H1 (cell line): ENCODE measurements at regions of chr3 and their contacts with region 1.

Region 1: DNA sequence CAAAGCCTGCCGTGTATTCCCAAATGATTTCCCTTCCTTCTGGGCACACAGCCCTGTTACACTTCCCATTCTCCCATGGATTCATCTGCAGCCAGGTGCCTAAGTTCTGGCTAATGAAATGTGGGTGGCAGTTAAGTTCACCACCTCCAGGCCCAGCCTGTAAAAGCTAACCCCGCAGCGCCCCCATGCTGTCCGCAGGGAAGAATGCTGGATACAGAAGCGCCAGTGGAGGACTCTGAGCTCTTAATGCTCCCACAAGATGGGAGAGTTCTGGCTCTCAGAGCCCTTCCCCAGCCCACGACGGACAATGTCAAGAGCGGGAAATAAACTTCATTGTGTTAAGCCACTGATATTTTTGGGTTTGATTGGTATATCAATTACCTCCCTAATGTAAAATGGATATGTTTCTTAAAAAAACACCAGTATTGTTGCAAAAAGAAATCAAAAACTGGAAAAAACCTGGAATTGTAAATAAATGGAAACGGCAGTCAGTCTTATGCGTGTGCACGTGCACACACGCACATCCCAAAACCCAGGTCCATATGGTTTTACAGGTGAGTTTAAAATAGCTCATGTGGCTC is 37.7 kb upstream of the FGD5 start:
- DNase-seq: peak; percentile 70 to 85
- H3K4me3 ChIP-seq: no peak overlapping the region
- H3K27ac ChIP-seq: no peak overlapping the region
- H3K4me1 ChIP-seq: peaks cover 2 to 9% (median 6%) of the 10 kb centered on the region in 4 experiments; a peak in 4 of 7 replicates
- H3K27me3 ChIP-seq: no peaks in the 10 kb centered on the region
- CTCF ChIP-seq: peak; percentile 84 to 97 (median 94)
- EP300 ChIP-seq: no peak
- POLR2A ChIP-seq: no peak
- RAD21 ChIP-seq: peak; percentile 93 to 95

Region 2: DNA sequence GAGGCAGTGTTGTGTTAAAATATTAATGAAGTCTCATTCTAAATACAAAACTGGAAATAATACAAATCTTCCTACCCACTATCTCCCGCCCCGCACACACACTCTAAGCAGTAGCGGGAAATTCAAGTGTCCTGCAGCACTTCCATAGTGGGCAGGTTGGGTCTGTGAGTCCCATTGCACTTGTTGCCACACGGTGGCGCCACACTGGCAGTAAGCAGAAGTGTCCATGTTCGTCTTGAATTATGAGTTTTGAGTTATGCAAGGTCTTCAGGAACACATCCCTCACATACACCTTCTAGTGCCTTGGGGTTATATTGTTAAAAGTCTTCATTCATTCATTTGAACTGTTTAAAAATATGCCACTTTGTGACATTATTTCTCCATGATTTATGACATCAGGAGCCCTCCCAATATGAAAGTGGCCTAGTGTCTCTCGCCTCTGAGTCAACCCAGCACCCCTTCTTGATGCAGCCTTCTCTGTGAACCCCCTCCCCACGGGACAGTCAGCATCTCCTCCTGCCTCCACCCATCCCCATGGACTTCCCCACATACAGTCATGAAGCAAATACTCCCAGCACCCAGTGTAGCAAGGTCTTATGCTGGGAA is 147.1 kb before region 1 on chr3:
- CTCF ChIA-PET with region 1: interaction called, 16 read pairs
- POLR2A ChIA-PET with region 1: no interaction called
- DNase-seq: peak in 1 of 2 experiments; percentile 57
- H3K4me3 ChIP-seq: no peak overlapping the region
- H3K27ac ChIP-seq: no peak overlapping the region
- H3K4me1 ChIP-seq: no peaks in the 10 kb centered on the region
- H3K27me3 ChIP-seq: no peaks in the 10 kb centered on the region; a peak in 1 of 7 replicates
- CTCF ChIP-seq: peak; percentile 84 to 99 (median 95)
- EP300 ChIP-seq: no peak
- POLR2A ChIP-seq: no peak
- RAD21 ChIP-seq: peak; percentile 54 to 67

Region 3: DNA sequence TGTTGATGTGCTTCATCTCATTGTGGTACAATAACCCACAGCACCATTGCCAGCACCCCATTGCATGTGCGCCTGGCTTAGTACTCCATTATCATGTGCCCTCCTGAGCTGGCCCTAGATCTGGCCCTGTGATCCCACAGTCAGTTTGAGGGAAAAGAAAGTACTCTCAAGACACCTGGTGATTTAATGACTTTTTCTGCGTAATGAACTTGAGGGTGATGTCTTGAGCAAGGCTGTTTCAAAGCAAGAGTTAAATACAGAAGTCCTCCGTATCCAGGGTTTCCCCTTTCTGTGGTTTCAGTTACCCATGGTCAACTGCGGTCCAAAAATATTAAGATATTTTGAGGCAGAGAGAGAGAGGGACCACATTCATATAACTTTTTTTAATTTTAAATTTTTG is 89.8 kb before region 1 on chr3:
- CTCF ChIA-PET with region 1: interaction called, 10 read pairs
- POLR2A ChIA-PET with region 1: no interaction called
- DNase-seq: no peak
- H3K4me3 ChIP-seq: no peak overlapping the region
- H3K27ac ChIP-seq: no peak overlapping the region
- H3K4me1 ChIP-seq: no peaks in the 10 kb centered on the region
- H3K27me3 ChIP-seq: no peaks in the 10 kb centered on the region; a peak in 1 of 7 replicates
- CTCF ChIP-seq: no peak
- EP300 ChIP-seq: no peak
- POLR2A ChIP-seq: no peak
- RAD21 ChIP-seq: no peak

Region 4: GRCh38 chr3:14766428-14767244 is 14.4 kb before region 1 on chr3:
- CTCF ChIA-PET with region 1: interaction called, 20 read pairs
- POLR2A ChIA-PET with region 1: no interaction called
- DNase-seq: peak in 1 of 2 experiments; percentile 39
- H3K4me3 ChIP-seq: no peak overlapping the region
- H3K27ac ChIP-seq: no peak overlapping the region; the same call in 1 of the 2 replicates
- H3K4me1 ChIP-seq: no peaks in the 10 kb centered on the region
- H3K27me3 ChIP-seq: no peaks in the 10 kb centered on the region
- CTCF ChIP-seq: no peak
- EP300 ChIP-seq: no peak
- POLR2A ChIP-seq: no peak
- RAD21 ChIP-seq: no peak

Region 5: GRCh38 chr3:14863333-14864100 is 82.5 kb after region 1 on chr3:
- CTCF ChIA-PET with region 1: interaction called, 11 read pairs
- POLR2A ChIA-PET with region 1: no interaction called
- DNase-seq: peak in 1 of 2 experiments; percentile 21
- H3K4me3 ChIP-seq: no peak overlapping the region
- H3K27ac ChIP-seq: no peak overlapping the region
- H3K4me1 ChIP-seq: peaks cover 4 to 16% (median 13%) of the 10 kb centered on the region in 4 experiments
- H3K27me3 ChIP-seq: no peaks in the 10 kb centered on the region
- CTCF ChIP-seq: peak; percentile 65 to 82 (median 80)
- EP300 ChIP-seq: no peak
- POLR2A ChIP-seq: no peak
- RAD21 ChIP-seq: peak; percentile 51 to 63

Region 6: GRCh38 chr3:14921078-14921616 is 140.1 kb after region 1 on chr3:
- CTCF ChIA-PET with region 1: interaction called, 81 read pairs
- POLR2A ChIA-PET with region 1: interaction called, 3 read pairs
- DNase-seq: peak; percentile 76 to 95
- H3K4me3 ChIP-seq: no peak overlapping the region
- H3K27ac ChIP-seq: no peak overlapping the region
- H3K4me1 ChIP-seq: peaks cover 0 to 9% (median 1%) of the 10 kb centered on the region in 4 experiments; a peak in 4 of 7 replicates
- H3K27me3 ChIP-seq: no peaks in the 10 kb centered on the region
- CTCF ChIP-seq: peak in 2 of 3 experiments; percentile 97 to 99; a peak in 3 of 4 replicates
- EP300 ChIP-seq: peak in 1 of 2 experiments; percentile 22; a peak in 1 of 3 replicates
- POLR2A ChIP-seq: no peak
- RAD21 ChIP-seq: peak; percentile 99 to 100